ENCODE measurements at regions of chr17 and their contacts with region 1.

Region 1: GRCh38 chr17:57671667-57672632 is 73.1 kb downstream of the CCDC182 start:
- DNase-seq: peak; percentile 68 to 88 (median 81)
- H3K4me3 ChIP-seq: peak overlapping the region in 22 of 59 donors; percentile 0 to 42 (median 22)
- H3K27ac ChIP-seq: peak overlapping the region in 54 of 59 donors; percentile 20 to 83 (median 65)
- H3K27me3 ChIP-seq: no peaks in the 10 kb centered on the region
- CTCF ChIP-seq: peak; percentile 81 to 99 (median 95)

Region 2: GRCh38 chr17:57243171-57243948 is 428.6 kb before region 1 on chr17:
- intact Hi-C with region 1: loop called (anchors 5 kb)
- DNase-seq: peak in 6 of 10 donors; percentile 23 to 64 (median 48)
- H3K4me3 ChIP-seq: no peak overlapping the region
- H3K27ac ChIP-seq: no peak overlapping the region
- H3K27me3 ChIP-seq: no peaks in the 10 kb centered on the region
- CTCF ChIP-seq: peak; percentile 60 to 99 (median 94)

Region 3: DNA sequence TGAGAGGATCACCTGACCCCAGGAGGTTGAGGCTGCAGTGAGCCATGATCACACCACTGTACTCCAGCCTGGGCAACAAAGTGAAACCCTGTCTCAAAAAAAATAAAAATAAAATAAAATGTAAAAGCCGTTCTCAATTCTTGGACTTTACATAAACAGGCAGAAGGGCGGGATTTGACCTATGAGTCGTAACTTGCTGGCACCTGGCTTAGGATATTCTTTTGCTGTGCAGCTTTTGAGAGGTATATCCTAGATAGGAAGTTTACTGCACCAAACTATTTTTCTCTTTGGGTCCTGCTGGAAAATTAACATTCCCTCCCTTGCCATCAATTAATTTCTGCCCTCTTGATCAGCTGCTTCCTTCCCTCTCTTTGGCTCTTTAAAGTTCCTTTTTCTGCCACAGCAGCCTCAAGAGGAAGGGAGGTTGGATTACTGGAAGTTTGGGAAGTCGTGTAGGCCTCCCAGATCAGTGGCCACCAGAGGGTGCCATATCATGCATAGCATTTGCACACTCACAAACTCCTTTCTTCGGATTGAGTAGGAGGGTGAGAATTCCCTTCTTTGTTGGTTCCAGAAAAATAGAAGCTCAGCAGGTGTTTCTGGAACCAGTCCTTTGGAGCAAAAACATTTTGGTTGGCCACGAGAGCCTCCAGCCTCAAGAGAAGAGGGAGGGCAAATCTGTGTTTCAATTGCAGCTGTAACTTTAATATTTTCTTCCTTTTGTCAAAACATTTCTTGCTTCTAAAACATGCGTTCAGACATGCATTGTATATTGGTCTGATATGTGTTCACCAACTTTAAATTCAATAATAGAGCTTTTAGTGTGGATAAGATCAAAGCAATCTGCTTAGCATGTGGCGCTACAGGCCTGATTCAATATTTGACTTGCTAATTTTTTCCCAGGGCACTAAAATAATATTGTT is 74.2 kb before region 1 on chr17:
- intact Hi-C with region 1: loop called in 1 of 2 experiments (anchors 2 kb)
- DNase-seq: peak in 9 of 10 donors; percentile 47 to 86 (median 76)
- H3K4me3 ChIP-seq: no peak overlapping the region
- H3K27ac ChIP-seq: peak overlapping the region in 44 of 59 donors; percentile 0 to 82 (median 48)
- H3K27me3 ChIP-seq: no peaks in the 10 kb centered on the region
- CTCF ChIP-seq: peak; percentile 74 to 97 (median 89)

Region 4: DNA sequence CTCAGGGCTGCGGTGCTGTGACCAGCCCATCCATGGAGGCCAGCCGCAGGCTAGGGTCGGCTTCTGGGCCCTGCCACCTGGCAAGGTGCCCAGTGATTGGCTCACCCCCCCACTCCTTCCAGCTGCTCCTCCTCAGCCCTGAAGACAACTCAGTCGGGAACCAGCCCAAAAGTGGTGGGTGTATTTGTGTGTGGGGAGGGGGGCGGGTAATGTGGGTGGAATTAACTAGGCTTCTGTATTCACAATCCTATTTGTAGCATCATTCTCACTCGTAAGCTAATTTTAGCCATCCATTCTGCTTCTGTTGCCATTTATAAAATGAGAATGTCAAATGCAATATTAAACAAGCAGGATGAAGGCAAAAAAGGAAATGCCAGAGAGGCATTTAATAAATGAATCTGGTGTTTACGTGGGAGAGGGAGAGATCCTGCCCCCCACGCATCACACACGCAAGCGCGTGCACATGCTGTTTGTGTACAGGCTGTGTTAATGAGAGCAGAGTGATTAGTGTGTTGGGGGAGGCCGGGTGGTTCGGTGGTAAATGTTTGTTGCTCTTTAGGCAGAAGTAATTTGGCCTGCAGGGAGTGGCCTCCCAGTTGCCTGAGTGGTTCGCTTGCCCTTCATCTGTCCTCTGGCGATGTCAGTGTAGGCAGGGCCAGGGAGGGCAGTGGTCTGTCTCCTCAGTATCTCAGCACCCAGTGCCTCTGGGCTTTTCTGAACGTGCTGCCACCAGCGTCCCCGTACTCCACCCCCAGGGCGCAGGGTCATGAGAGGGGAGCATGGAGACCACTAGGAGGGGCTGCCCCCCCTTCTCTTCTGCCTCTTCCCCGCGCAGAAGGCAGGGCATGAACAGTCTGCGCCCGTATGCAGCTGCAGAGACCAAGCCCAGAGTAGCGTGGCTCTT is 66.9 kb before region 1 on chr17:
- intact Hi-C with region 1: loop called in 1 of 2 experiments (anchors 5 kb)
- DNase-seq: peak; percentile 23 to 67 (median 56)
- H3K4me3 ChIP-seq: peak overlapping the region in 49 of 59 donors; percentile 3 to 58 (median 28)
- H3K27ac ChIP-seq: peak overlapping the region; percentile 8 to 88 (median 74)
- H3K27me3 ChIP-seq: no peaks in the 10 kb centered on the region
- CTCF ChIP-seq: peak in 8 of 56 donors; percentile 10 to 21 (median 16)

Region 5: DNA sequence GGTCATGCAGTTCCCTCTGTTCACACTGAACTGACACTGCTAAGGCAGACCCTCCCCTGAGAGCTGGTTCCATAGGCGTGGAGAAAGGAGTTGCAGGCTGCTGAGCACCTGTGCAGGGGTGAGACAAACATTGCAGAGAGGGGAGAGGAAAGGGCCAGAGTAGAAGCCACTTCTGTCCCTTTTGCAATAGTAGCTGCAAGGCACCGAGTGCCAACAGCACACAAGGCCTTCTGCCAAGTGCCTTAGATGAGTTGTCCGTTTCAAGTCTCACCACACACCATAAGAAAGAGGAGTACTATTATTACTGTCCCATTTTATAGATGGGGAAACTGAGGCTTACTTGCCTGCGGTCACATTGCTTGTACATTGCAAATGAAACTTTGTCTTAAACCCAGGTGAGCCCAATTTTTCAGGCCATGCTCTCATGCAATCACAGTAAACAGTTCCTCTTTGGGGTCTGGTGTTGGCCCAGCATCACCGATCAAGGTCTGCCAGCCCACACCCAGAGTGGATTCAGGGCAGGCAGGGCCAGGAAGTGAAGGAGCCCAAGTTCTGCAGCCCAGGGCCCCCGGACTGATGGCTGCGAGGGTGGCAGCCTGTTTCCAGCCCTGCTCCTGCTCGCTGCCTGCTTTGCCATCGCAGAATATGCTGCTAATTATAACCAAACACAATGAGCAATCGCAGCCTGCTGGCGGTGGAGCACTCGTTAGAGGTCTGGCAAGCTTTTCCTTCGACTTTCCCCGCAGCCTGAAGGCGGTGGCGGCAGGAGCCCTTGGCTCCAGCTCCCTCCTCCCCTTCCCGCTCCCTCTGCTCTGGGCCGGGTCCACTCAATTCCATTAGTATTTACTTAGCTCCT is 374.5 kb after region 1 on chr17:
- intact Hi-C with region 1: no loop called
- DNase-seq: peak; percentile 21 to 78 (median 71)
- H3K4me3 ChIP-seq: peak overlapping the region in 3 of 59 donors; percentile 2 to 17 (median 12)
- H3K27ac ChIP-seq: peak overlapping the region in 26 of 59 donors; percentile 4 to 73 (median 44)
- H3K27me3 ChIP-seq: peaks cover 0 to 5% (median 0%) of the 10 kb centered on the region in 45 donors
- CTCF ChIP-seq: no peak

Measured in dorsolateral prefrontal cortex (tissue), 120 donors.